Activated CD4-positive, alpha-beta T cell treated with anti-CD3 and anti-CD28 coated beads for 36 hours (primary cell): ENCODE measurements at regions of chr18 and their contacts with region 1.

Region 1: DNA sequence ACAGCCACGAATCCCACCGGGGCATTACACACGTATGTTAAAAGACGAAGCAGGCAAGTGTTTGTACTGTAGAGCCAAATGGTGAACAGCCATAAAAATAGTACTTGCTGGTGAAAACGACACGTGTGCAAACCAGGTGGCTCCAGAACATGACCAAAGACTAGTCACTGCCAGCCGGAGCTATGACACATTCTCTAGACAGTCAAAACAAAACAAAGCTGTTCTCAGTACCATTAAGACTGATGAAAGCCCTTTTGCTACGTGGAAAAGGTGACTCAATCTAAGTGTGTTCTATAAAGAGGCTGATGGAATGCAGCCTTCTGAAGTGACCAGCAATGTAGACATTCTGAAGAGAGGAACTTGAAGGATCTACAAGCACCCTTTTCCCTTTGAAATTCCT is 367.7 kb upstream of the NETO1 start:
- DNase-seq: peak; percentile 11
- ATAC-seq: peak; percentile 76
- H3K4me3 Mint-ChIP-seq: no peak overlapping the region
- H3K27ac Mint-ChIP-seq: no peak overlapping the region
- H3K4me1 Mint-ChIP-seq: no peaks in the 10 kb centered on the region
- H3K27me3 Mint-ChIP-seq: no peaks in the 10 kb centered on the region

Region 2: GRCh38 chr18:73218293-73218692 is 17.2 kb before region 1 on chr18:
- CTCF ChIA-PET with region 1: no interaction called
- POLR2A ChIA-PET with region 1: no interaction called
- intact Hi-C with region 1: loop called in 1 of 2 experiments (anchors 1 kb)
- DNase-seq: no peak
- ATAC-seq: no peak
- H3K4me3 Mint-ChIP-seq: no peak overlapping the region
- H3K27ac Mint-ChIP-seq: no peak overlapping the region
- H3K4me1 Mint-ChIP-seq: no peaks in the 10 kb centered on the region
- H3K27me3 Mint-ChIP-seq: no peaks in the 10 kb centered on the region

Region 3: GRCh38 chr18:73249030-73249429 is 13.5 kb after region 1 on chr18:
- CTCF ChIA-PET with region 1: no interaction called
- POLR2A ChIA-PET with region 1: no interaction called
- intact Hi-C with region 1: no loop called
- DNase-seq: no peak
- ATAC-seq: no peak
- H3K4me3 Mint-ChIP-seq: no peak overlapping the region
- H3K27ac Mint-ChIP-seq: no peak overlapping the region
- H3K4me1 Mint-ChIP-seq: no peaks in the 10 kb centered on the region
- H3K27me3 Mint-ChIP-seq: no peaks in the 10 kb centered on the region